ENCODE measurements at regions of chr3 and their contacts with region 1.

Region 1: DNA sequence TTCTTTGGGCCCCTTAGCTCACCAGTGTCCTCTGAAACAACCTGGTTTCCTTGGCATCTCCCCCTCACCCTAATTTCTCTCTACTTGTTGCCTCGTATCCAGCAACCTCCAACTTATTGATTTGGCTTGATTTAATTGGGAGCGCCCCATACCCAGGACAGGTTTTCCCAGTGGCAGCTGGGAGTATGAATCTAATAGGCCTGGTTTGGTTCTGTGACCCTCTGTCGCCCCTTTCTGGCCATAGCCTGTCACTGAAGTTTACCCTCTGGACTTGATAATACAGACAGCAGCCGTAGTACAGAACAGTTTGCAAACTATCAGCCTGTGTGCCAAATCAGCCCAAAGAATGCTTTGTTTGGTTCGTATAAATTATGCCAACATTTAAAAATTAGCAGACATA is 525.1 kb upstream of the GOLIM4 start:
- DNase-seq: peak; percentile 36
- H3K4me3 ChIP-seq: peak overlapping the region in 1 of 2 experiments; percentile 54; a peak in 1 of 4 replicates
- H3K27ac ChIP-seq: no peak overlapping the region
- H3K4me1 ChIP-seq: no peaks in the 10 kb centered on the region; a peak in 1 of 4 replicates
- H3K27me3 ChIP-seq: no peaks in the 10 kb centered on the region
- CTCF ChIP-seq: peak; percentile 50
- EP300 ChIP-seq: no peak
- RAD21 ChIP-seq: peak; percentile 85

Region 2: DNA sequence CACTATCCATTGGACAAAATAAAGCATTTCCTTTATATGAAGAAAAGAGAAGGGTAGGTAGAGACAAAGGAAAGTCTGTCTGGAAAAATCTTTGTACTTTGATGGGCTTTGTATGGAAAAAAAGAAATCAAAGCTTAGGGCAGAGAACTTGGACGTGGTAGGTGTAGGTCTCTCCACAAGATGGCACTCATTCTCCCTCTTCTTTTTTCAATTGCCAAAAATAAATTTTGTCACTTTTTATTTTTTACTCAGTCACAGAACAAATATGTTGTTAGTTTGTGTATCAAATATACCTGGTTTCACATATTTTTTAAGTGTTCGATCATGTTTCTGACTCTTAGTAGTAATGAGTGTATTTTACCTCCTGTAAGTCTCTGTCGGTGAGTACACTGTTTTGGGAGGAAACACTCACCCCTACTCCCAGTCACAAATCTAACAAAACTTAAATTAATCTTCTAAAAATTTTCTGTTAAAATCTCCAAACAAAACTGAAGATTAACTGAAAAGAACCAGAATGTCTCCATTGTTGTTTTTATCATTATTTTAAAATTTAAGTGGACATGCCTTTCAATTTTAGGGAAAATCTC is 109.3 kb before region 1 on chr3:
- CTCF ChIA-PET with region 1: interaction called, 61 read pairs
- POLR2A ChIA-PET with region 1: no interaction called
- DNase-seq: peak; percentile 12
- H3K4me3 ChIP-seq: no peak overlapping the region
- H3K27ac ChIP-seq: no peak overlapping the region
- H3K4me1 ChIP-seq: no peaks in the 10 kb centered on the region
- H3K27me3 ChIP-seq: no peaks in the 10 kb centered on the region
- CTCF ChIP-seq: peak; percentile 62
- EP300 ChIP-seq: no peak
- RAD21 ChIP-seq: peak; percentile 76

Region 3: GRCh38 chr3:168517249-168518071 is 103.4 kb before region 1 on chr3:
- CTCF ChIA-PET with region 1: interaction called, 22 read pairs
- POLR2A ChIA-PET with region 1: no interaction called
- DNase-seq: no peak
- H3K4me3 ChIP-seq: no peak overlapping the region
- H3K27ac ChIP-seq: no peak overlapping the region
- H3K4me1 ChIP-seq: peaks cover 0 to 3% of the 10 kb centered on the region in 2 experiments; a peak in 1 of 4 replicates
- H3K27me3 ChIP-seq: no peaks in the 10 kb centered on the region
- CTCF ChIP-seq: no peak
- EP300 ChIP-seq: no peak
- RAD21 ChIP-seq: peak; percentile 18; the same call in 1 of the 2 replicates

Region 4: GRCh38 chr3:168583977-168584376 is 36.8 kb before region 1 on chr3:
- CTCF ChIA-PET with region 1: no interaction called
- POLR2A ChIA-PET with region 1: no interaction called
- DNase-seq: no peak
- H3K4me3 ChIP-seq: no peak overlapping the region
- H3K27ac ChIP-seq: no peak overlapping the region
- H3K4me1 ChIP-seq: no peaks in the 10 kb centered on the region
- H3K27me3 ChIP-seq: no peaks in the 10 kb centered on the region
- CTCF ChIP-seq: no peak
- EP300 ChIP-seq: no peak
- RAD21 ChIP-seq: no peak

Region 5: GRCh38 chr3:168914662-168915061 is 293.8 kb after region 1 on chr3:
- CTCF ChIA-PET with region 1: no interaction called
- POLR2A ChIA-PET with region 1: no interaction called
- DNase-seq: no peak
- H3K4me3 ChIP-seq: no peak overlapping the region
- H3K27ac ChIP-seq: no peak overlapping the region
- H3K4me1 ChIP-seq: no peaks in the 10 kb centered on the region
- H3K27me3 ChIP-seq: no peaks in the 10 kb centered on the region
- CTCF ChIP-seq: no peak
- EP300 ChIP-seq: no peak
- RAD21 ChIP-seq: no peak